Right ventricle myocardium inferior (tissue), 1 donor: ENCODE measurements at regions of chr7 and their contacts with region 1.

Region 1: GRCh38 chr7:31919678-31920369 is 150.4 kb downstream of the PDE1C start:
- DNase-seq: peak; percentile 47
- ATAC-seq: peak; percentile 49

Region 2: DNA sequence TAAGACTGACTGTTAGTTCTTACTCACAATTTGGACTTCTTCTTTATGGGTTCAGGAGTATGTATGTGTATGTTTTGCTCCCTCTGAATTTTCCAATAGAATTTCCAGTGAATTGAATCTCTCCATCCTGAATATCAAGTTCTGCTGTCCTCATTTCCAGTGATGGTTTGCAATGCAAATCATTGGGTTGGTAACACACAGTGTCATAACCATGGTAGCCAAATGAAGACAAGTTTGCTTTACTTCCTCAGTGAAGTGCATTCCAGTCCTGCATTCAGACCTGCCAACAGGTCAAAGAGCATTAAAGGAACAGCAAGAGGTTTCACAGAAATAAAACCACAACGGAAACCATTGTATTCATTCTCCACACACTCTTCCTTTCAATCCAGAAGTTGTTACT is 390.7 kb before region 1 on chr7:
- intact Hi-C with region 1: no loop called
- DNase-seq: no peak
- ATAC-seq: no peak

Region 3: DNA sequence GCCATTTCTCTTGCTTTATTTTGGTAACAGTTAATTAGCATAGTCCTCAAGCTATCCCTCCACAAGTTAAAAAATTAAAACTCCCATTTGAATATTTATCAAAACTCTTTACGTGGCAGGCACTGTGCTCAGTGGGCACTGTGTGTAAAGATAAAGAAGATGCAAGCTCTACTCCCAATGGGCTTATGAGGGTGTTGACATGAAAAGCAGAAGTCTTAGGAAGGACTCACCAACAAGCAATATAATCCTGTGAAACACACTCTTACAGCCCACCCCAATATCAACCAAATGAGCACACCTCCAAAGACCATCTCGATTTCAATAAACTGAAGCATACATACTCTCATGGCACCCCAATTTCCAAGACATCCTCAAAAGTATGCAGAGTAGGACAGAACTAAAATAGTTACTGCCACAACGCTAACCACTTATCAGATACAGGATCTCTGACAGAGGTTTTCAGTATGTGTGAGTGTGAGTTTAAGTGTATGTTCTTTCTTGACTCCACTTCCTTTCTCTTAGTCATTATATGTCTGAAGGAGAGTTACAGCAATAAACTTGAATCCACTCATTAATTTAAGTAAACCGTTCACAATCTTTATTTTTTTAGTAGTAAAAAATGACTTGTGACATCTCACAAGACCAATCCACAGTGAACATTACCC is 30.4 kb after region 1 on chr7:
- intact Hi-C with region 1: loop called (anchors 5 kb)
- DNase-seq: no peak
- ATAC-seq: no peak

Region 4: GRCh38 chr7:32102432-32102873 is 182.6 kb after region 1 on chr7:
- intact Hi-C with region 1: no loop called
- DNase-seq: no peak
- ATAC-seq: peak; percentile 87

Region 5: GRCh38 chr7:32218154-32218467 is 298.3 kb after region 1 on chr7:
- intact Hi-C with region 1: no loop called
- DNase-seq: no peak
- ATAC-seq: peak; percentile 77